Calu3 (cell line): ENCODE measurements at regions of chr21 and their contacts with region 1.

Region 1: GRCh38 chr21:29299916-29300806 is 1.4 kb downstream of the BACH1 start:
- DNase-seq: peak; percentile 27
- H3K4me3 Mint-ChIP-seq: peak overlapping the region; percentile 94
- H3K27ac Mint-ChIP-seq: peak overlapping the region; percentile 92
- H3K4me1 Mint-ChIP-seq: peaks cover 16% of the 10 kb centered on the region
- H3K27me3 Mint-ChIP-seq: no peaks in the 10 kb centered on the region
- CTCF ChIP-seq: no peak

Region 2: DNA sequence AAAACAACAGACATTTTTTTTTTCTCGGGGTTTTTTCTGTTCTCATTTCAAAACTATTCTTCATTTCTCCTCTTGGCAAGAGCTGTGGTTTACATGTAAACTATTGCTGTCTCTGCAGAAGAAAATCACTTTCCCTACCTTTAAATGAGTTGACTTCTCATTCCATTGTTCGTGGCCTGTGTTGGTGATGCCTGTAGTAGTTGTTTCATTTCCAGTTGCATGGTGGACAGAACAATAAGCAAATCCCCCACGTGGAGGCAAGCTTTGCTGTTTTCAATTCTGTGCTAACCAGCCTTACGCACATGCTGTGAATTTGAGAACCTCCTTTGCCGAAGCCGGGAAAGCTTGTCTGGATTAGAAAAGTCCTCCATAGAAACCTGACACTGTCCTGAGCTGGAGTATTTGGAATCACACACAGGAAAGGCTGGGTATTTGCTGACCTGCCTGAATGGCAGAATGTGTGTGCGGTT is 195.9 kb before region 1 on chr21:
- CTCF ChIA-PET with region 1: no interaction called
- intact Hi-C with region 1: no loop called
- DNase-seq: no peak
- H3K4me3 Mint-ChIP-seq: no peak overlapping the region
- H3K27ac Mint-ChIP-seq: no peak overlapping the region
- H3K4me1 Mint-ChIP-seq: peaks cover 12% of the 10 kb centered on the region
- H3K27me3 Mint-ChIP-seq: no peaks in the 10 kb centered on the region
- CTCF ChIP-seq: no peak

Region 3: DNA sequence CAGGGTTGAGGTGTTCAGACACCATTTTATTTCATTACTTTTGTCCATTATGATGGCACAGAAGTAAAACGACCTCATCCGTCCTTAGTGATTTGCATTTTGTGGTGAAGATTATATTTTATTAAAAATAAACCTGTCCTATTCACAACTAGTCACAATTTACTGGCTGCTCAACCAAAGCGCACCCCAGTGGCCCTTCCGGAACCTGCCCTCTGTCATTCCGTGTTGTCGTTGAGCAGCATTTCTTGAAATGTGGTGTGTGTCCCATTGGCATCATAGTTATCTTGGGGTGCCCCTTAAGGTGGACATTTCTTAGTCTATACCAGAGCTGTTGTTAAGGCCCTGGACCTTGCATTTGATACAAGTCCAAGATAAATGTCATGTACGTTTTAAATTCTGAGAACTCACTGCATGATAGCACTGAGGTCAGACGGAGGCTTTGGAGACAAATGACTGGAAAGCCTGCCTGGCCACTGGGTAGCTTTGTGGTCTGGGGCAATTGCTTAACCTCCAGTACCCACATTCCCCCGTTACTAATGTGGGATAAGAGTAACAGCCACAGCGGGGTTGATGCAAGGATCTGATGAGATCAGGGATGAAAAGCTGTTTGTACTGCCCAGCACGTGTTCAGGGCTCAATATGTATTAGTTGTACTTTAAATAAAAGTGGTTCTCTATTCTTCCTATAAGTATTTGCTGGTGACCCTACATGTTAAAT is 34.7 kb after region 1 on chr21:
- CTCF ChIA-PET with region 1: interaction called, 5 read pairs
- intact Hi-C with region 1: loop called (anchors 5 kb)
- DNase-seq: no peak
- H3K4me3 Mint-ChIP-seq: no peak overlapping the region
- H3K27ac Mint-ChIP-seq: no peak overlapping the region
- H3K4me1 Mint-ChIP-seq: peaks cover 23% of the 10 kb centered on the region
- H3K27me3 Mint-ChIP-seq: no peaks in the 10 kb centered on the region
- CTCF ChIP-seq: no peak

Region 4: DNA sequence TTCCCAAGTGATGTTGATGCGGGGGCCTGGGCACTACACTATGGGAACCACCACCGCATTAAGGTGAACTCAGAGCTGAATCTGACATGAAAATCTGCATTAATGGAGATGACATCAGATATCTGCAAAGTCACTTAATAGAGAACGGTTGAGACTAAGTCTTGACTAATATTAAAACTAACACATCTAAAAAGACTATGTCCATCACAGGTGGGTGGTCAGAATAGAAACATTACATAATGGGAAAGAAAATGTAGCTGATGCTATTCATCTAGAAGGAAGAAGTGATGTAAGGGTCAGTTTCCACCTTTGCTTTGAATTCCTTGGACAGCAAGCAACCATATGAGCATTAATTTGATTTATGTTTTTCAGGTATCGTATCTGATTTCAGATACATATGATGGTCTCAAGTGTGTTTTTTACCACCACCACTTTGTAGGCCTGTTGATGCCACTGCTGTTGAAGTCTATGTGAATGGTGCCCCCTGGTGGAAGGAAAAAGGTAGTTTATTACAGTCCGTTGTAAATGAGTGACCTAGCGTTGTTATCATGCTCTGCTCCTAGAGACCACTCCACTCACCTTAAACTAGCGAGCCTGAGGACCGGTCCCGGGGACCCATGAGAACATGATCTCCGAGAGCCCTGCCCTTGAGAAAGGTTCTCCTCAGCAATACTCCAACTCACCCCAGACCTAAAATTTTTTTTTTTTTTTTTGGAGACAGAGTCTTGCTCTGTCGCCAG is 72.1 kb after region 1 on chr21:
- CTCF ChIA-PET with region 1: no interaction called
- intact Hi-C with region 1: no loop called
- DNase-seq: peak; percentile 57
- H3K4me3 Mint-ChIP-seq: no peak overlapping the region
- H3K27ac Mint-ChIP-seq: no peak overlapping the region
- H3K4me1 Mint-ChIP-seq: no peaks in the 10 kb centered on the region
- H3K27me3 Mint-ChIP-seq: no peaks in the 10 kb centered on the region
- CTCF ChIP-seq: no peak